Dendritic cell treated with granulocyte-macrophage colony-stimulating factor and Interleukin-4, amounts not matched to agents 40 ng/mL and 50 ng/mL, for 4 days (primary cell): ENCODE measurements at regions of chr2 and their contacts with region 1.

Region 1: DNA sequence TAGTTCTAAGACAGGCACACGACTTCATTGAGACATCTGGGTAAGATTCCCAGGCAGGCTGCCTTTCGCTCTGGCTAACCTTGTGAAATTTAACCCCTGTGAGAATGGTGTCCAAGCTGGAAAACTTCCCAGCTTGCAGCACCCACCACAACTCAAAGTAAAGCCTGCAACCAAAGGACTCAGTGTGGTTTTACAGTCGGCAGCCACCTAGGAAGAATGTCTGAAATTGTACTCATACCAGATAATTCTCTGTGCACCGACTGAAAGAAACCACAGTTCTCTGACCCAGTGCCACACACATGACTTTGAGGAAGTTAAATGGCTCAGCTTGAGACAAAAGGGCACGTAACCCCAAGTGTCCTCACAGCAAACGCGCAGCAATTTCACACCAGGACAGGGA is 125.7 kb downstream of the RBMS1 start:
- H3K4me3 Mint-ChIP-seq: peak overlapping the region; percentile 4
- H3K27ac Mint-ChIP-seq: peak overlapping the region; percentile 66
- H3K4me1 Mint-ChIP-seq: peaks cover 73% of the 10 kb centered on the region
- H3K27me3 Mint-ChIP-seq: no peaks in the 10 kb centered on the region

Region 2: DNA sequence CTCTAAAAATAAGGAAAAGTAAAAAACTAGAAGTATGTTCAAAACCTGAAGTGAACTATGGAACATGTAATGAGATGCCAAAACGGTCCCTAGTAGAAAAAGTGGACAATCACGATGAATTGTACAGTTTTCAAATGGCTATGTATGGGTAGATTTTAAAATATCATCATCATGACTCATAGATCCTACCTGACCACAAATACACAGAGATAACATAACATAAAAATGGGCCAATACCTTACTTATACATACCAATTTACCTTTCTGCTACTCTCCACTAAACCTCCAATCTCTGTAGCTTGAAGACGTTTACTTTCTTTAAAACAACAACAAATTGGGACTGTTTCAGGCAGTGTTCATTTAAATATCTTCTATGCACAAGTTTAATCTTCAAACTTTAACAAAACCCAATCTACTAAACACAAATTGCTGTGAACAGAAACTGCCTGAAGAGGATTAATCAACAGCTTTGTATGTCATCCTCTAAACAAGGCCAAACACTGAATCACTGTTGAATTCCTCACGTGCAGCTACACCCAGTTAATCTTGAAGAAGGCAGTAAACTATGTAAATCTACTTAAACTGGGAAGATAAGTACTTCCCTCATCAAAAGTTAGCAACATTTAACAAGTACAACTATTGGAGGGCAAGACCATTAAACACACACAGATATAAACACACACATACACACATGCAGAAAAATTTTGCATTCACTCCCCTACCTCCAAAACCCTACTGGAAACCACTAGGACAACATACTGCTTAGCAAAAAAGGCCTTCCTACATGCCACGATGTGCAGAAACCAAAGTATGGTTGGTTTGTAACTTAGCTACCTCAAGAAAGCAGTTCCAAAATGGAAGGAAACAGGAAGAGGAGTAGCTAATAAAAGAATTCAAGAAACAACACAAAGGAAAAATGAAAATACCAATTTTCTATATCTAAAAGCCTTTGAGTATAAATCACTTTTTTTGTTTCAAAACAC is 35.4 kb after region 1 on chr2:
- intact Hi-C with region 1: loop called (anchors 5 kb)
- H3K4me3 Mint-ChIP-seq: peak overlapping the region; percentile 13
- H3K27ac Mint-ChIP-seq: peak overlapping the region; percentile 69
- H3K4me1 Mint-ChIP-seq: peaks cover 46% of the 10 kb centered on the region
- H3K27me3 Mint-ChIP-seq: no peaks in the 10 kb centered on the region

Region 3: GRCh38 chr2:160411167-160411566 is 43.3 kb after region 1 on chr2:
- intact Hi-C with region 1: loop called (anchors 5 kb)
- H3K4me3 Mint-ChIP-seq: no peak overlapping the region
- H3K27ac Mint-ChIP-seq: peak overlapping the region; percentile 84
- H3K4me1 Mint-ChIP-seq: peaks cover 32% of the 10 kb centered on the region
- H3K27me3 Mint-ChIP-seq: no peaks in the 10 kb centered on the region